GM18951 (cell line): ENCODE measurements at regions of chr14 and their contacts with region 1.

Region 1: DNA sequence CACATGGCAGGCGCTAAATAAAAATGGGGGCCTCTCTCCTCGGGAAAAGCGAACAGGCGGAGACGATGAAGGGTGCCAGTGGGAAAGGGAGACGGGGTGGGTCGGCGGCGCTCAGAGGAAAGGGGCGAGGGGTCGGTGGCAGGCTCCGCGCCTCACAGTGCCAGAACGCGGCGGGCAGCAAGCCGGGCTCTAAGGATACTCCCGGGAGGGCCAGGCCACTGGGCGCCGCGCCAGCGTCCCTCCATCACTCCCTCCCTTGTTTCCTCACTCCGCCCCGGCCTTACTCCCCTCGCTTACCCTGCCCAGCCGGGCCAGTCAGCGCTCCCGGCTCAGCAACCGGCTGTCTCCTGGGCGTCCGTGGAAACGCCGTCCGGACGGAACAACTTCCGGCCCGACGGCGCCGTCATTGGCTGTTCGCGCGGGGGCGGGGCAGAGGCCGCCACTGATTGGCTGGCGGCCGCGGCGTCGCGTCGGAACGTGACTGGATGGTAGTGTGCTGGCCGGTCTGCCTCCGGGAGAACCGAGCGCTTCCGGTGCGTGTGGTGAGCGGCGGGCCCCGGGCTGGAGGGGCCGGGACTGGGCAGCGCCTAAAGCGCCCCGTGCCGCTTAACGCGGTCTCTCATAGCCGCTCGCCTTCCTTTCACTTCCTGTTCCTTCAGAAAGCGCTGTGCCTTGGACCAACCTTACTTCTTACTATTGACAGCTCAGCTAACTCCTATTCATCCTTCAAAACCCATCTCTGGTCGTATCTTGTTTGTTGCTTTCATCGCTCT is 53.0 kb downstream of the SLC25A47 start:
- POLR2A ChIP-seq: peak; percentile 78

Region 2: GRCh38 chr14:100645192-100645990 is 269.2 kb after region 1 on chr14:
- in situ Hi-C with region 1: loop called (anchors 25 kb)
- POLR2A ChIP-seq: no peak